ENCODE measurements at regions of chr4 and their contacts with region 1.

Region 1: DNA sequence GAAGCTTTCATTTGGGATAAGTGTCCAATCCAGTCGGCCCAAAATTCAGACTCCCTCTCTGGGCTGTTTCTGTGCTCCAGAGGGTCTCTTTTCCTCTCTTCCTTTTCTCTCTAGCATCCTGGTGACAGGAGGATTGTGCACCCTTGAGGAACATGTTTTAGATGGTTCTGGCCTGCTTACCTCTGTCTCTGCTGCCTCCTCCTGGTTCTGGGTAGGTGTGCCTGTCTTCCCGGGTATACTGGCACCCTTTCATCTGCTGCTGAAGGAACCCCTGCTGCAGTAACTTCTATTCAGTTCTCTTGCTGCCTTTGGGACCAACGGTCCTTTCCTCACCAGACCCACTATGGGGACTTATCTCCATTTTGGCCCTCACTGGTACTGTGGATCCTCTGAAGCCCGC is 53.2 kb downstream of the HMGB2 start:
- DNase-seq: no peak
- H3K4me3 ChIP-seq: no peak overlapping the region
- H3K27ac ChIP-seq: no peak overlapping the region
- H3K4me1 ChIP-seq: peaks cover 15% of the 10 kb centered on the region
- CTCF ChIP-seq: peak; percentile 52

Region 2: DNA sequence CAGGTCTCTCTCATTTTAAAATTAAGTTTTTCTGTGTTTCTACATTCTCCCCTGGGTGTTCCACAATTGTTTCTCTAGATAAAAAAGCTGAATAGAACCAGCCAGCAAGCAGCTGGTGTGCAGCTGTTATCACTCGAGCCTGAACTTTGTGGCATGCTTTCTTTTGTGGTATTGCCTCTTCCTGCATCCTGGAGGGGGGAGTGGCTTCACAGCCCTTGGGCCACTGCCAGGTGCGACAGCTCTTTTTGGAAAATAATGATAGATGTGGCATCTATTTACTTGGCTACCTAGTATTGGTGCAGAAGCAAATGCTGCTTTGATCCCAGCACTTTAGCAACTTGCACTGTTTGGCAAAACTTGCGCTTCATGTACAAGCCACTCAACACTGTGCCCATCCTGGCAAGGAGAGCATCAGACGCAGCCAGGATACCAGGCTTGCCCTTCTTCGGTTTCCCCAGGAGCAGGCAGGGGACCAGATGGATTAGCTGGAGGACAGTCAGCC is 16.3 kb before region 1 on chr4:
- CTCF ChIA-PET with region 1: no interaction called
- POLR2A ChIA-PET with region 1: interaction called, 13 read pairs
- intact Hi-C with region 1: no loop called
- DNase-seq: peak; percentile 94
- H3K4me3 ChIP-seq: peak overlapping the region; percentile 58
- H3K27ac ChIP-seq: peak overlapping the region; percentile 92
- H3K4me1 ChIP-seq: peaks cover 49% of the 10 kb centered on the region
- CTCF ChIP-seq: no peak

Region 3: GRCh38 chr4:173807347-173807746 is 526.3 kb after region 1 on chr4:
- CTCF ChIA-PET with region 1: no interaction called
- POLR2A ChIA-PET with region 1: no interaction called
- intact Hi-C with region 1: no loop called
- DNase-seq: no peak
- H3K4me3 ChIP-seq: no peak overlapping the region
- H3K27ac ChIP-seq: no peak overlapping the region
- H3K4me1 ChIP-seq: no peaks in the 10 kb centered on the region
- CTCF ChIP-seq: no peak

Measured in OCI-LY7 (cell line).